ENCODE measurements at regions of chr22 and their contacts with region 1.

Region 1: GRCh38 chr22:19629720-19630419 is 84.4 kb upstream of the SEPTIN5 start:
- DNase-seq: peak; percentile 91
- H3K4me3 Mint-ChIP-seq: no peak overlapping the region
- H3K27ac Mint-ChIP-seq: no peak overlapping the region
- H3K4me1 Mint-ChIP-seq: peaks cover 2% of the 10 kb centered on the region
- H3K27me3 Mint-ChIP-seq: peaks cover 6% of the 10 kb centered on the region

Region 2: DNA sequence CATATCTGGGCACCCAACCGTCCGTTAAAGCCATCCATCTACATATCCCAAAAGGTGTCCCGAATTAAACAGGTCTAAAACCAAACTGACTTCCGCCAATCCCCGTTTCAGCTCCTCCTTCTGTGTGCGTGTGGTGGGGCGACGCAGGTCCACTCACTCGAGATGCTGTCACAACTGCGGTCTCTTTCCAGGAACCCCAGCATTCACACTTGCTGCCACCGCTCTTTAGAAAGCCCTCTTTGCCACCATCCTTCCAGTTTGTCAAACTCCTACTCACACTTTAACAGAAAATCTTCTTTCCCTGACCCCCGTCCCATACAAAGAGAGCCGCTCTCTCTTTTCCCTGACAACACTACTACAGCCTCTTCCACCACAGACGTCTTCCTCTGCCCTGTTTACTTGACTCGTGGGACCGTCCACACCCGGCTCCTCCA is 485.9 kb before region 1 on chr22:
- CTCF ChIA-PET with region 1: interaction called, 6 read pairs
- POLR2A ChIA-PET with region 1: no interaction called
- intact Hi-C with region 1: loop called (anchors 1 kb)
- DNase-seq: peak; percentile 64
- H3K4me3 Mint-ChIP-seq: peak overlapping the region; percentile 99
- H3K27ac Mint-ChIP-seq: peak overlapping the region; percentile 91
- H3K4me1 Mint-ChIP-seq: peaks cover 17% of the 10 kb centered on the region
- H3K27me3 Mint-ChIP-seq: peaks cover 6% of the 10 kb centered on the region

Region 3: DNA sequence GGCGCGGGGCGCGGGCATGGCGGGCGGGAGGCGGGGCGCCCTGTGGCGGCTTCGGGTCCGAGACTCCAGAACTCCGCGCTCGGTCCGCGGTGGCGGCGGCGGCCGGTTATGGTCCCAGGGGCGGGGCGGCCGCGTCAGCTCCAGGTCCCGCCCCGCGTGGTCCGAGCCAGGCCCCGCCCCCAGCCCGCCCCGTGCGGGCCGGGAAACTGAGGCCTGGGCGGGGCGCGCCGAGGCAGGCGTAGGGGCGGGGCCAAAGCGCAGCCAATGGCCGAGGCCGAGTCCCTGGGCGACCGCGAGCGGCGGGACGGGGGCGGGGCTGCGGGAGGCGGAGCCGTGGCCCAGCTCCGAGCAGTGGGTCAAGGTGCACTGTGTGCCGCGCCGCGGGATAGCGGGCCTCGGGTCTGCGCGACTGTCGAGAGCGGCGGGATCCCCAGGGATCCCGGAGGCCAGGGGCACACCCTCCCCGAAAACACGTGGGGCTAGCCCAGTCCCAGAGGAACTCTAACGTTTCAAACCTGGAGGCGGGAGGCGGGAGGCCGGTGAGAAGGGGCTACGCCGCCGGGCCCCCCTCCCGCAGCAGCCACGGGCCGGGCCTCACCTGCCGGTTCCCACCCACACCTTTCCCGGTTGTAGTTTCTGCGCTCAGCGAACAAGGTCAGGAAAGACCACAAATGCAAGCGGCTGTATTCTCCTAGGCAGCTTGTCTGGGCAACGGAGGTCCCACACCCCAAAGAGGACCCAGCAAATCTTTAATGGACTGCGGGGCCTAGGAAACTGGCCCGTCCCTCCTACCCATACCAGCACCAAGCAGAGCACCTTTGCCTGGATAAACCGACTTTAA is 451.0 kb before region 1 on chr22 and contains the start of gene SLC25A1:
- CTCF ChIA-PET with region 1: interaction called, 13 read pairs
- POLR2A ChIA-PET with region 1: no interaction called
- intact Hi-C with region 1: no loop called
- DNase-seq: peak; percentile 89
- H3K4me3 Mint-ChIP-seq: peak within 1 kb of the TSS; percentile 64
- H3K27ac Mint-ChIP-seq: no peak within 1 kb of the TSS
- H3K4me1 Mint-ChIP-seq: peaks cover 32% of the 10 kb centered on the region
- H3K27me3 Mint-ChIP-seq: no peaks in the 10 kb centered on the region
- total RNA-seq, gene SLC25A1: 62.9 to 67.4 TPM

Region 4: GRCh38 chr22:19304547-19304946 is 325.3 kb before region 1 on chr22:
- CTCF ChIA-PET with region 1: interaction called, 3 read pairs
- POLR2A ChIA-PET with region 1: no interaction called
- intact Hi-C with region 1: loop called (anchors 5 kb)
- DNase-seq: no peak
- H3K4me3 Mint-ChIP-seq: no peak overlapping the region
- H3K27ac Mint-ChIP-seq: no peak overlapping the region
- H3K4me1 Mint-ChIP-seq: no peaks in the 10 kb centered on the region
- H3K27me3 Mint-ChIP-seq: no peaks in the 10 kb centered on the region

Region 5: DNA sequence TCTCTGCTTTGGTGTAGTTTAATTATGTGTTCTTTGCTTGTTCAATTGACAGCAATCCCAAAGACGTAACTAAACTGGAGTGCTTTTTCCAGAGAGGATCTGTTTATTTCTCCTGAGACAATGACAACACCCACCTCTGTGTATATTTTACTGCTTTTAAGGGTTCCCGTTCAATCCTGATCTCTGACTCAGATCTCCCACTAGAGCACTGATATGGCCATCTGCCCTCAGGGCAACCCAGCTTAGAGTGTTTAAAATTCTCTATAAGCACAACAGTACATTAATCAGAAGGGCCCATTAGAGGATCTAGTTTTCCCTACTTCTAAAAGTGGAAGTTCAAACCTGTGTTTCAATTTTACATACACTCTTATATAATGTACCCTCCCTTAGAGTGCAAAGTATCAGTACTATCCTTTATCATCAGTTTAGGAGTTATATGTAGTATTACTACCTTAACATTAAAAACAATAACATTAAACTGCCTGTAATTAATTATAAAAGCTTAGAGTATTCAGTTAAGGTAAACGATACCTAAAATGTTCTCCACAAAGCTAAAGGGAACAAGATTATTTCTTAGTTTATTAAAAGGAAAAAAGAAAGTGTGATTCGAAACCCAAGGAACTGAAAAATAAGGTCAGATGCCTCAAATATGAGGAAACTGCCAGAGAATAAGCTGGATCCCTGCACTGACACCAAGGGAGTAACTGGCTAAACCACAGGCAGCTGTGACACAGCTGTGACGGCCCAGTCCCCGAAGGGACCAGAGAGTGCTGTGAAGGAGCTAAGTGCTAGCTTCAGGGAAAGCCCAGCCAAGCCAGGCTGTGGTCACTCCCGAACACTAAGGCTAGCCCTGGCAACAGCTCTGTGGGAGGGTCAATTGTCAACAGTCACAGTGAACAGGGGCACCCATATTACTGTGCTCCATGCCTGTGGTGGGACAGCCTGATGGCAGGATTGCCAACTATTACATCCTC is 166.1 kb before region 1 on chr22:
- CTCF ChIA-PET with region 1: interaction called, 12 read pairs
- POLR2A ChIA-PET with region 1: no interaction called
- intact Hi-C with region 1: no loop called
- DNase-seq: no peak
- H3K4me3 Mint-ChIP-seq: no peak overlapping the region
- H3K27ac Mint-ChIP-seq: no peak overlapping the region
- H3K4me1 Mint-ChIP-seq: no peaks in the 10 kb centered on the region
- H3K27me3 Mint-ChIP-seq: no peaks in the 10 kb centered on the region

Region 6: DNA sequence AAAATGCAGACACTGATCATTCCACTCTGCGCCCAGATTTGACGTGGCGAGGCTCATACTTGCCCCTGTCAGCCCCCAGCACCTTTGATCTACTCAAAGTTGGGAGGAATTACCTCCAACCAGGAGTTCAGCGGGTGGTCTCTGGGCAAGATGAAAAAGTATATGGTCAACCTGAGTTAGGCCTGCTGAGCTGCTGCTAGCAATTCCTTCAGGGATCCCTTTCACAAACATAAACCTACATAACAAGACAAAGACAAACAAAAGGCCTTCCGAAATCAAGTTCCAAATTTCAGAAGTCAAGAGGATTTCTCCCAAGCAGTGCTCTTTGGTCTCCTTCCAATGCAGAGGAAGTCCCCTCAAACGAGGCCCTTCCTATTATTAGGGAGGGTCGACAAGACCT is 126.5 kb before region 1 on chr22:
- CTCF ChIA-PET with region 1: interaction called, 13 read pairs
- POLR2A ChIA-PET with region 1: no interaction called
- intact Hi-C with region 1: no loop called
- DNase-seq: no peak
- H3K4me3 Mint-ChIP-seq: no peak overlapping the region
- H3K27ac Mint-ChIP-seq: no peak overlapping the region
- H3K4me1 Mint-ChIP-seq: peaks cover 3% of the 10 kb centered on the region
- H3K27me3 Mint-ChIP-seq: no peaks in the 10 kb centered on the region

Region 7: DNA sequence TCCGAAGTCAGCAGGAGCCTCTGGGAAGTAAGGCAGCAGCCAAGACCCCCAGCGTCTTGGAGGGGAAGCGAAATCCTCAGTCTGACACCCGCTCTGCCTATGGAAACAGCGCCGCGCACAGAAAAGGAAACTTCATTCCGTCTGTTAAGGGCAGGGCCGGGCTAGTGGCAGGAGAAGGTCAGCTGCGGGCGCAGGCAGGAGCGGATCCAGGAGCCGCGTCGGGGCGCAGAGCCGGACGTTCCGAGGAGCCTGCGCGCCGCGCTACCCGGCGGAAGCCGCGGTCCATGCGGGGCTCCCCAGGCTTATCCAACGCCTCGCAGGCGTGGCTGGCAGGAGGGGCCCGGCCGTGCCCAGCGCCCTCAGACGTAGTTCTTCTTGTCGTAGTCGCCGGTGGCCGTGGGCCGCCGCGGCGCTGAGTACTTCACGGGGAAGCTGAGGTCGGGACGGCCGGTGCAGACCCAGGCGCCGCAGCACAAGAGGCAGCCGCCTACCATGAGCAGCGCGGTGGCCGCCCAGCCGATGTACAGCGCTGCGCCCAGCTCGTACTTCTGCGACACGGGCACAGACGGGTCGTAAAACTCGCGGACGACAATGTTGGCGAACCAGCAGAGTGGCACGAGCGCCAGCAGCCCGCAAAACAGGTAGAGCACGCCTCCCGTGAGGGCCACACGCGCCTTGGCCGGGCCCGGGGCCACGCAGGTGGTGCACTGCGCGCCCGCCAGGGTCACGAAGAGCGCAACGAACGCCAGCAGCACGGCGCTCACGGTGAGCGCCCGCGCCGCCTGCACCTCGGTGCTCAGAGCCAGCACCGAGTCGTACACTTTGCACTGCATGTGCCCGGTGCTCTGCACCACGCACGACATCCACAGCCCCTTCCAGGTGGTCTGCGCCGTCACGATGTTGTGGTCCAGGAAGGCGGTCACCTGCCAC is 106.4 kb before region 1 on chr22:
- CTCF ChIA-PET with region 1: interaction called, 8 read pairs
- POLR2A ChIA-PET with region 1: no interaction called
- intact Hi-C with region 1: loop called (anchors 5 kb)
- DNase-seq: peak; percentile 44
- H3K4me3 Mint-ChIP-seq: peak overlapping the region; percentile 41
- H3K27ac Mint-ChIP-seq: no peak overlapping the region
- H3K4me1 Mint-ChIP-seq: peaks cover 17% of the 10 kb centered on the region
- H3K27me3 Mint-ChIP-seq: peaks cover 32% of the 10 kb centered on the region

Region 8: DNA sequence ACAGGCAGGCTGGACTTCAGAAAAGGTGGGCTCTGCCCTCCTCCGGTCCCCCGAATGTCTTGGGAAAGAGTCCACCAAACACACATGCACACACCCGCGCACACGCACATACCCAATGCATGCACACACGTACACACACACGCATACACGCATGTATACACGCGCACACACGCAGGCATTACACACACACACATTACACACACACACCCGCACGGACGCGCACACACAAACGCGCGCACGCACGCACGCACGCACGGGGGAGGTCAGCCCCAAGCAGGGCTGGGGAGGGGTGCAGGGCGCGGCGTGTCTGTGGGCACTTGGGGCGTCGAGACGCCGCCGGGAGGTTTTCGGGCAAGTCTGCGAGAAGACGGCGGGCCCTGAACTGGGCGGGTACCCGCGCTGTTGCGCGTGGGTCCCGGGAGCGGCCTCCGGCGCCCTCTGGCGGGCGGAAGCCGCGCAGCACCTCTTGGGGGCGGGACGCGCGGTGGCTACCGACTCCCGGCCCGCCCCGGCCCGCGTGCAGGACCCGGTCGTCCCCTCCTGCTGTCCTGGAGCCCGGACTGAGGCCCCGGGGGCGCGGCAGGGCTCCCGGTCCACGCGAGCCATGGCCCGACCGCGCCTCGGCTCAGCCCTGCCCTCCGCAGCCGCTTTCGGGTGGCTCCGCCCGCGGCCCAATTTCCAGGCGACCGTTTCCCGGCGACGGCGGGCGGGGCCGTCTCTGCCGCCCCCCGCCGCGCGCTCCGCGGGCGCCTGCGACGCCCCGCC is 88.0 kb after region 1 on chr22:
- CTCF ChIA-PET with region 1: no interaction called
- POLR2A ChIA-PET with region 1: no interaction called
- intact Hi-C with region 1: no loop called
- DNase-seq: peak; percentile 83
- H3K4me3 Mint-ChIP-seq: peak overlapping the region; percentile 60
- H3K27ac Mint-ChIP-seq: no peak overlapping the region
- H3K4me1 Mint-ChIP-seq: peaks cover 8% of the 10 kb centered on the region
- H3K27me3 Mint-ChIP-seq: peaks cover 45% of the 10 kb centered on the region